ENCODE measurements at regions of chr6 and their contacts with region 1.

Region 1: GRCh38 chr6:131199568-131200272 is 64.5 kb downstream of the AKAP7 start:
- DNase-seq: peak; percentile 83 to 90 (median 87)
- H3K4me3 ChIP-seq: peak overlapping the region in 1 of 2 donors; percentile 54
- H3K4me3 Mint-ChIP-seq: peak overlapping the region; percentile 66 to 88 (median 82)
- H3K27ac ChIP-seq: peak overlapping the region; percentile 66
- H3K27ac Mint-ChIP-seq: peak overlapping the region; percentile 90 to 97 (median 95)
- H3K4me1 ChIP-seq: peaks cover 64% of the 10 kb centered on the region
- H3K4me1 Mint-ChIP-seq: peaks cover 43 to 62% (median 52%) of the 10 kb centered on the region in 4 donors
- H3K27me3 ChIP-seq: no peaks in the 10 kb centered on the region
- H3K27me3 Mint-ChIP-seq: no peaks in the 10 kb centered on the region

Region 2: DNA sequence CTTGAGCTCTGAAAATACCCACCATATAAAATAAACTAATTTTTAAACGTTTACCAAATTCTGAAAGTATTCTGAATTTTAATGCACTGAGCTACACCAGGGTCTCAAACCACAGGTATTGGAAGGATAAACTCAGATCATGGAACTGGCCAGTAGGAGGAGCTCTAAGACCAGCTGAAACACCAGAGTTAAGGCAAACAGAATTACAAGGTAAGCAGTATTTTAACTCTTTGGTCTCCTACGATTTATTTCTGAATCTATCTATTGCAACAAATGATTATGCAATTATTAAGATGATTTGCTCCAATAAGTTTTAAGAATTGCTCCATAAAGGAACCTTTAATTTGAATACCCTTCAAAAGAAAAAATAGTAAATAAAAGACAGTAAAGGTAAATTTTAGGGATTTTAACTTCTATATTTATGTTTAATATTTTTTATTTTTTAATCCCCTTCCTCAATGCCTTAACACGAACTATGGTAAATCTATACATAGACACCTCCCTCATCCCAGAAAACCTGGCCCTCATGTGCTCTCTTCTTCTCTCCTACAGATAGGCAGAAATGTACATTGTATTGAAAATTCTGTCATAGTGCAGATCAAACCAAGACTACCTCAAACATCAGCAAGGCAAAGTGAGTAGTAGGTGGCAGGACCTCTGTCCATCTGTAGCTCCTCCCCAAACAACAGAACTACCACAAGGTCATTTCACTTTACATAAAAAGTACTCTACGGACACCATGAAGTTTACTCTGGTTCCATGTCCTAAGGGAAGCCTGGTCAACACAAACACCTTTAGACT is 314.1 kb before region 1 on chr6:
- CTCF ChIA-PET with region 1: interaction called, 11 read pairs
- POLR2A ChIA-PET with region 1: no interaction called
- intact Hi-C with region 1: loop called (anchors 1 kb)
- DNase-seq: peak; percentile 72 to 79 (median 77)
- H3K4me3 ChIP-seq: no peak overlapping the region
- H3K4me3 Mint-ChIP-seq: no peak overlapping the region
- H3K27ac ChIP-seq: no peak overlapping the region
- H3K27ac Mint-ChIP-seq: no peak overlapping the region
- H3K4me1 ChIP-seq: no peaks in the 10 kb centered on the region
- H3K4me1 Mint-ChIP-seq: no peaks in the 10 kb centered on the region
- H3K27me3 ChIP-seq: no peaks in the 10 kb centered on the region
- H3K27me3 Mint-ChIP-seq: no peaks in the 10 kb centered on the region

Region 3: GRCh38 chr6:131213501-131213990 is 13.8 kb after region 1 on chr6:
- CTCF ChIA-PET with region 1: interaction called, 5 read pairs
- POLR2A ChIA-PET with region 1: interaction called, 19 read pairs
- intact Hi-C with region 1: no loop called
- DNase-seq: no peak
- H3K4me3 ChIP-seq: no peak overlapping the region
- H3K4me3 Mint-ChIP-seq: peak overlapping the region in 6 of 8 donors; percentile 15 to 62 (median 39)
- H3K27ac ChIP-seq: no peak overlapping the region
- H3K27ac Mint-ChIP-seq: peak overlapping the region in 6 of 7 donors; percentile 32 to 85 (median 70)
- H3K4me1 ChIP-seq: peaks cover 31% of the 10 kb centered on the region
- H3K4me1 Mint-ChIP-seq: peaks cover 38 to 47% (median 43%) of the 10 kb centered on the region in 4 donors
- H3K27me3 ChIP-seq: no peaks in the 10 kb centered on the region
- H3K27me3 Mint-ChIP-seq: no peaks in the 10 kb centered on the region

Region 4: GRCh38 chr6:131348319-131348971 is 148.7 kb after region 1 on chr6:
- CTCF ChIA-PET with region 1: no interaction called
- POLR2A ChIA-PET with region 1: no interaction called
- intact Hi-C with region 1: no loop called
- DNase-seq: no peak
- H3K4me3 ChIP-seq: no peak overlapping the region
- H3K4me3 Mint-ChIP-seq: no peak overlapping the region
- H3K27ac ChIP-seq: no peak overlapping the region
- H3K27ac Mint-ChIP-seq: no peak overlapping the region
- H3K4me1 ChIP-seq: no peaks in the 10 kb centered on the region
- H3K4me1 Mint-ChIP-seq: peaks cover 0 to 9% (median 2%) of the 10 kb centered on the region in 4 donors
- H3K27me3 ChIP-seq: no peaks in the 10 kb centered on the region
- H3K27me3 Mint-ChIP-seq: no peaks in the 10 kb centered on the region

Region 5: DNA sequence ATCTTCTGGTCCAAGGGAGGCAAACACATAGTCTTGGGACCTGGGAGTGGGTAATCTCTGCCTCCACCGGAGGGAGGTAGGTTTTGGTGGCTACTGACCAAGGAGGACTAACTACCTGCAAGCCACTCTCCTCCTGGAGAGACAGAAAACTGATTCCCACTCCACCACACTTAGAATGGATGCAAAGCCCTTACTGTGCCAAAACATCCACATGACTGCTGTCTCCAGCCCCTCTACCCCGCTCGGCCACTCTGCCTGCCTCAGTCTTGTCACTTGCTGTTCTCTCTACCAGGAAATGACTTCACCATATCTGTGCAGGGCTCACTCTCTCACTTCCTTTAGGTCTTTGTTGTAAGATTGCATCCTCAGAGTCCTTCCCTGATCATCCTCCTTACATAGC is 243.8 kb after region 1 on chr6:
- CTCF ChIA-PET with region 1: interaction called, 5 read pairs
- POLR2A ChIA-PET with region 1: no interaction called
- intact Hi-C with region 1: loop called (anchors 5 kb)
- DNase-seq: peak in 4 of 5 donors; percentile 19 to 30 (median 25)
- H3K4me3 ChIP-seq: peak overlapping the region; percentile 43 to 48
- H3K4me3 Mint-ChIP-seq: peak overlapping the region; percentile 85 to 94 (median 90)
- H3K27ac ChIP-seq: peak overlapping the region; percentile 32
- H3K27ac Mint-ChIP-seq: peak overlapping the region; percentile 8 to 95 (median 86)
- H3K4me1 ChIP-seq: peaks cover 42% of the 10 kb centered on the region
- H3K4me1 Mint-ChIP-seq: peaks cover 29 to 55% (median 42%) of the 10 kb centered on the region in 4 donors
- H3K27me3 ChIP-seq: no peaks in the 10 kb centered on the region
- H3K27me3 Mint-ChIP-seq: no peaks in the 10 kb centered on the region

Region 6: DNA sequence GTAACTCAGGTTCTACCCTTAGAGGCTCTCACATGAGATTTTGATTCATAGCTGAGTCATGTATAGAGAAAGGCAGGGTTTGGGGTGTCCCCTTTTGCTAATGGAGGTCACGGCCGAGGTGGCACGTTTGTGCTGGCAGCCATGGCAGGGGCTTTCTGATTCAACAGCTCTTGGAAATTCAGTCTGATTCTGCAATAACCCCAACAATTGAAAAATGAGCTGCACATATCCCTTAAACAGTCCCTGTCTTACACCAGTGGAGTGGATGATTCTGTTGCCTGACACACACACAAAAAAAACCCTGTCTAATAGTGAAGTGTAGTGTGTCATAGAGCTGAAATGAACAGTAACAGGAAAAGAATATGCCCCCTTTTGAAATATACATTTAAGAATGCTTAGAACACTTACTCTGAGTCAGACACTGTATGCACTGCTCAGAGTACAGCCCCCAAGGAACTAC is 332.9 kb after region 1 on chr6:
- CTCF ChIA-PET with region 1: interaction called, 143 read pairs
- POLR2A ChIA-PET with region 1: interaction called, 87 read pairs
- intact Hi-C with region 1: loop called (anchors 1 kb)
- DNase-seq: no peak
- H3K4me3 ChIP-seq: no peak overlapping the region
- H3K4me3 Mint-ChIP-seq: peak overlapping the region in 4 of 8 donors; percentile 2 to 52 (median 39)
- H3K27ac ChIP-seq: no peak overlapping the region
- H3K27ac Mint-ChIP-seq: peak overlapping the region in 5 of 7 donors; percentile 7 to 74 (median 55)
- H3K4me1 ChIP-seq: peaks cover 19% of the 10 kb centered on the region
- H3K4me1 Mint-ChIP-seq: peaks cover 31 to 55% (median 44%) of the 10 kb centered on the region in 4 donors
- H3K27me3 ChIP-seq: no peaks in the 10 kb centered on the region
- H3K27me3 Mint-ChIP-seq: peaks cover 0 to 5% of the 10 kb centered on the region in 2 donors

Region 7: DNA sequence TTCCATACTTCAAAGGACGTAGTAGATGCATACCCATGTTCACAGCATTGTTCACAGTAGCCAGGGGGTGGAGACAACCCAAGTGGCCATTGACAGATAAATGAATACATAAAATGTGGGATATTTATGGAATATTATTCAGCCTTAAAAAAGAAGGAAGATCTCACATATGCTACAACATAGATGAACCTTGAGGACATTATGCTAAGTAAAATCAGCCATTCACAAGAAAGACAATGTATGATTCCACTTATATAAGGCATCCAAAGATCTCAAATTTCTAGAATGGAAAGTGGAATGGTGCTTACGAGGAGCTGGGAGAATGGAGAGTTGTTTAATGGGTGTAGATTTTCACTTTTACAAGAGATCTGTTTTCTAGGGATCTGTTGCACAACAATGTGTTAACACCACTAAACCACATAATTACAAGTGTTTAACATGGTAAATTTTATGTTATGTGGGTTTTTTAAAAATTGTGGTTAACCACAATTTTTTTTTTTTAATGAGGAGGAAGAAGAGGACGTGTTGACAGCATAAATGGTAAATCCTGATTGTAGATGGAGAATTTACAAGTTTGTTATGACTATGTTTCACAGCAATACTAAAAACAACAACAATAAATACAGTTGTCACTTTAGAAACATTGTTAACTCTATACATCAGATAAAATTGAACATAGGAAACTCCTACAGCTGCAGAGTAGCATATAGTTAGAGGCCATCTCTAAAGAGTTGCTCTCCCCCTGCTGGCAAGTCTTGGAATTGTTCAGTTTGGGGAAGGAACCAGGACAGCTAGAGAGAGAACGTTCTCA is 709.9 kb after region 1 on chr6:
- CTCF ChIA-PET with region 1: interaction called, 3 read pairs
- POLR2A ChIA-PET with region 1: no interaction called
- intact Hi-C with region 1: loop called (anchors 2 kb)
- DNase-seq: peak; percentile 68 to 75 (median 73)
- H3K4me3 ChIP-seq: no peak overlapping the region
- H3K4me3 Mint-ChIP-seq: peak overlapping the region in 6 of 8 donors; percentile 21 to 79 (median 42)
- H3K27ac ChIP-seq: no peak overlapping the region
- H3K27ac Mint-ChIP-seq: peak overlapping the region in 5 of 7 donors; percentile 31 to 85 (median 74)
- H3K4me1 ChIP-seq: peaks cover 17% of the 10 kb centered on the region
- H3K4me1 Mint-ChIP-seq: peaks cover 11 to 26% (median 15%) of the 10 kb centered on the region in 4 donors
- H3K27me3 ChIP-seq: no peaks in the 10 kb centered on the region
- H3K27me3 Mint-ChIP-seq: peaks cover 10 to 16% of the 10 kb centered on the region in 2 donors